B cell (primary cell): ENCODE measurements at regions of chr1 and their contacts with region 1.

Region 1: DNA sequence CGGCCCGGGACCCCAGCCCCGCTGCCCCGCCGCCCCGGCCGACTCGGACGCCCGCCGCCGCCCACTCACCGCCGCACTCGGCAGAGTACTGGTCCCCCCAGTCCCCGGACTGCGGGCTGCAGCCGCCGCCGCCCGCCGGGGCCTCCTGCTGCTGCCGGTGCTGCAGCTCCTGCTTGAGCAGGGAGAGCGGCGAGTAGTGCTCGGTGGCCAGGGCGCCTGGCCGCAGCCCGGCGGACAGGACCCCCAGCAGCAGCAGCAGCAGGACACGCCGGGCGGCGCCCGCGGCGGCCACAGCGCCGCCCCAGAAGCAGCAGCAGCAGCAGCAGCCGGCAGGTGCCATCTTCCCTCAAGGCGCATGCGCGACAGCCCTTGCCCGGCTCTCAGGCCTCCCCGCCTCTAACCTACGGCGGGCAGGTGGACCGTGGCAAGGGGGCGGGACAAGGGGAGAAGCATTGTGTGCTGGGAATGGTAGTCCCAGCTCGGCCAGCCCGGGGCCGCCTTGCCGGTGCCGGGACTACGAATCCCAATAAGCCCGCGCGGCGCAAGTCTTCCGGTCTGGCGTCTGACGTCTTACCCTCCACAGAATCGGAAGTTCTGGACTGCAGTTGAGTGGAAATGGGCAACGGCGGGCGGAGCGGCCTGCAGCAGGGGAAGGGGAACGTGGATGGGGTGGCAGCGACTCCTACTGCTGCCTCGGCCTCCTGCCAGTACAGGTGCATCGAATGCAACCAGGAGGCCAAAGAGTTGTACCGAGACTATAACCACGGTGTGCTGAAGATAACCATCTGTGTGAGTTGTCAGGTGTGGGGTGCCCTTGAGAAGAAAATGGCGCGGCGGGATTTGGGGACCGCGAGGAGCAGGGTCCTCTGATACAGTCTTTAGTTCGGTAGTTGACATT is at the starts of genes ARV1 and TTC13:
- DNase-seq: peak; percentile 99
- ATAC-seq: peak; percentile 95
- H3K4me3 ChIP-seq: peak within 1 kb of the TSS; percentile 67 to 91 (median 74)
- H3K4me3 Mint-ChIP-seq: peak within 1 kb of the TSS; percentile 99
- H3K27ac ChIP-seq: peak within 1 kb of the TSS; percentile 66 to 78
- H3K27ac Mint-ChIP-seq: peak within 1 kb of the TSS; percentile 99
- H3K4me1 ChIP-seq: peaks cover 29 to 40% of the 10 kb centered on the region in 2 donors
- H3K4me1 Mint-ChIP-seq: peaks cover 46% of the 10 kb centered on the region
- H3K27me3 ChIP-seq: no peaks in the 10 kb centered on the region
- H3K27me3 Mint-ChIP-seq: no peaks in the 10 kb centered on the region
- CTCF ChIP-seq: peak; percentile 76
- total RNA-seq, gene ARV1: 10.7 and 12.0 TPM in 2 replicates
- total RNA-seq, gene TTC13: 55.0 TPM in 2 replicates

Region 2: DNA sequence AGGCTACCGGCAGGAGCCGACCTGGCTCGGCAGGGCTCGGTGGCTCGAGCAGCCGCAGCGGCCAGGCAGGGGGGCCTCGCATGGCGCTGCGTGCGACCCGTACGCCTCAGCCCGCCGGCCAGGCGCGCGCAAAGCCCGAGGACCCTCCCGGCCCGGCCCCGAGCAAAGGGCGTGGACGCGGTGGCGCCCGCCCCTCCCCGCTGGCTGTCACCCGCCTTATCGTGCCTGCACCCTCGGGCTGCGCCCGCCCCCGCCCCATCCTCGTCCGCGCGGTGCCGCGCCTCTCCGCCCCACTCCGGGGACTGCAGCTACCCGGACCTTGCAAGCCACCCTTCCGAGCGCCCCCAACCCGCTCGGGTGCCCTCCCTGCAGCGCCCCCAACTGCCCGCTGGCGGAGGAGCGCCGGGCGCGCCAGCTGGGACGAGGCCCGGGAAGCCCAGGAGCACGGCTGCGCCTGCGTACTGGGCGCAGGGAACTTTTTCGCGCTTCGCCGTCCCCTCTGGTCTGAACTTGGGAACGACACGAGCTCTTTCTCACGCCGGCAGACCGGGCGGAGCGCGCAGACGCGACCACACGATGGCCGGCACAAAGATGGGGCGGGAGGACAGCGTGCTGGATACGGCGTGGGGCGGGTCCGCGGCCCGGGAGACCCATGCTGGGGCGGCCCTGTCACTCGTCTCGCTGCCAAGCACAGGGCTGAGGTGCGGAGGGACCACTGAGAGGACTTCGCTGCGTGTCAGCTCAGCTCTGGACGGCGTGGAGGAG is 1420.0 kb before region 1 on chr1 and contains the start of gene ABCB10:
- CTCF ChIA-PET with region 1: no interaction called
- POLR2A ChIA-PET with region 1: no interaction called
- intact Hi-C with region 1: loop called (anchors 2 kb)
- DNase-seq: peak; percentile 95
- ATAC-seq: peak; percentile 82
- H3K4me3 ChIP-seq: peak within 1 kb of the TSS; percentile 65 to 85 (median 69)
- H3K4me3 Mint-ChIP-seq: peak within 1 kb of the TSS; percentile 96
- H3K27ac ChIP-seq: peak within 1 kb of the TSS; percentile 43 to 68
- H3K27ac Mint-ChIP-seq: peak within 1 kb of the TSS; percentile 90
- H3K4me1 ChIP-seq: peaks cover 16 to 18% of the 10 kb centered on the region in 2 donors
- H3K4me1 Mint-ChIP-seq: peaks cover 32% of the 10 kb centered on the region
- H3K27me3 ChIP-seq: no peaks in the 10 kb centered on the region
- H3K27me3 Mint-ChIP-seq: no peaks in the 10 kb centered on the region
- CTCF ChIP-seq: peak; percentile 60
- total RNA-seq, gene ABCB10: 17.0 and 18.6 TPM in 2 replicates

Region 3: GRCh38 chr1:230867903-230868735 is 110.6 kb before region 1 on chr1 and contains the start of gene C1orf198:
- CTCF ChIA-PET with region 1: no interaction called
- POLR2A ChIA-PET with region 1: no interaction called
- intact Hi-C with region 1: loop called (anchors 1 kb)
- DNase-seq: peak; percentile 85
- ATAC-seq: peak; percentile 96
- H3K4me3 ChIP-seq: peak within 1 kb of the TSS; percentile 25 to 87 (median 76)
- H3K4me3 Mint-ChIP-seq: peak within 1 kb of the TSS; percentile 90
- H3K27ac ChIP-seq: peak within 1 kb of the TSS in 1 of 2 donors; percentile 50
- H3K27ac Mint-ChIP-seq: peak within 1 kb of the TSS; percentile 72
- H3K4me1 ChIP-seq: peaks cover 13 to 16% of the 10 kb centered on the region in 2 donors
- H3K4me1 Mint-ChIP-seq: peaks cover 17% of the 10 kb centered on the region
- H3K27me3 ChIP-seq: peaks cover 0 to 24% (median 17%) of the 10 kb centered on the region in 4 experiments
- H3K27me3 Mint-ChIP-seq: peaks cover 37% of the 10 kb centered on the region
- CTCF ChIP-seq: no peak
- total RNA-seq, gene C1orf198: 6.6 TPM in 2 replicates

Region 4: DNA sequence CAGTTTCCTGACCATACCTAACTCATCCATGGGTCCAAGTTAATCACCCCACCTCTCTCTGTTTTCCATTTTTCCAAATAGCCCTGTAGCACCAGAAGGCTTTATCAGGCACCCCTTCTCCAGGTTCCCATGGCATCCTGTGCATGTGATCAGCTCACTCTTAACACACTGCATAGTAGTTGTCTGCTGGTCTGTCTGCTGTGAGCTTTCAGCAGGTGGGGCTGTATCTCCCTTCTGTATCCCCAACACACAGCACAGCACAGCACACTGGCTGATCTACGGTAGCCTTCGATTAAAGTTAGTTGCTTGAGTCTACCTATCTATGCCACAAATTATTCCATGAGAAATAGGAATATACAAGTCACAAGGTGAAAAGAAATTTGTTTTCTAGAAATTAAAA is 56.1 kb before region 1 on chr1:
- CTCF ChIA-PET with region 1: interaction called, 14 read pairs
- POLR2A ChIA-PET with region 1: no interaction called
- intact Hi-C with region 1: loop called (anchors 1 kb)
- DNase-seq: no peak
- ATAC-seq: no peak
- H3K4me3 ChIP-seq: no peak overlapping the region
- H3K4me3 Mint-ChIP-seq: no peak overlapping the region
- H3K27ac ChIP-seq: no peak overlapping the region
- H3K27ac Mint-ChIP-seq: no peak overlapping the region
- H3K4me1 ChIP-seq: no peaks in the 10 kb centered on the region
- H3K4me1 Mint-ChIP-seq: no peaks in the 10 kb centered on the region
- H3K27me3 ChIP-seq: no peaks in the 10 kb centered on the region
- H3K27me3 Mint-ChIP-seq: no peaks in the 10 kb centered on the region
- CTCF ChIP-seq: no peak

Region 5: GRCh38 chr1:230957580-230957989 is 21.2 kb before region 1 on chr1:
- CTCF ChIA-PET with region 1: interaction called, 12 read pairs
- POLR2A ChIA-PET with region 1: interaction called, 3 read pairs
- intact Hi-C with region 1: loop called (anchors 2 kb)
- DNase-seq: peak; percentile 50
- ATAC-seq: peak; percentile 65
- H3K4me3 ChIP-seq: no peak overlapping the region
- H3K4me3 Mint-ChIP-seq: peak overlapping the region; percentile 88
- H3K27ac ChIP-seq: peak overlapping the region; percentile 56 to 67
- H3K27ac Mint-ChIP-seq: peak overlapping the region; percentile 92
- H3K4me1 ChIP-seq: peaks cover 24 to 27% of the 10 kb centered on the region in 2 donors
- H3K4me1 Mint-ChIP-seq: peaks cover 44% of the 10 kb centered on the region
- H3K27me3 ChIP-seq: no peaks in the 10 kb centered on the region
- H3K27me3 Mint-ChIP-seq: no peaks in the 10 kb centered on the region
- CTCF ChIP-seq: no peak

Region 6: DNA sequence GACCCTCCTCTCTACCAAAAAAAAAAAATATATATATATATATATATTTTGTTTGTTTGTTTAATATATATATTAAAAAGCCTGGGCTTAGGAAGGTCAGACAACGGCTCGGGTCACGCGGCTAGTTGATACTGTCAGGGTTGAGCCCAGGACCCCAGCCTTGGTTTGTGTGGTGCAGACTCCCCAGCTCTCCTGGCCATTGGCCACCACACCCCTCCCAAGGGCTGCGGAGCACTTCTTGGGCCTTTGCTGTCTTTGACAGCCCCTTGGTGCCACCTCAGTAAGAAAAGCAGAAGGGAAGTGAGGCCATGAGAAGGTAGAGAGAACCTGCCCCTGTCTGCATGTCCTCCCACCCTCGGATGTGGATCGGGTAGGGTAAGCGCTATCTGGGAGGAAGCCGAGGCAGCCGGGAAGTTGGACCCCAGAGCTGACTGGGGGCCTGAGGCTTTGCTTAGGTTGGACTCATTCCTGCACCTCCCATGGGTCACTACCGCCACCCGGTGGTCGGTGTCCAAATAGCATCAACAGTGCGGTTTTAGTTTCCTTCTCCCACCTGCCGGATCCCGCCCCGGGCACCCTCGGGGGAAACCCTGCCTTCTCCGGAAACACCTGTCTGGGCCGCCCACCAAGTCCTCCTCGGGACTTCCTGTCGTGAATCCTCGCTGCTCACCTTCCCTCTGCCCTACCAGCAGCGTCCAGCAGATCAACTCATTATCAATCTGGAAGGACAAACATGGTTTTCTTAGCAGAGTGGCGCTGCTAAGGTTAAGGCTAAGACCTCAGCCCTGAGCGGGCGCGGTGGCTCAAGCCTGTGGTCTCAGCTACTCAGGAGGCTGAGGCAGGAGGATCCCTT is 232.5 kb after region 1 on chr1:
- CTCF ChIA-PET with region 1: interaction called, 5 read pairs
- POLR2A ChIA-PET with region 1: interaction called, 5 read pairs
- intact Hi-C with region 1: loop called (anchors 1 kb)
- DNase-seq: peak; percentile 94
- ATAC-seq: peak; percentile 93
- H3K4me3 ChIP-seq: peak overlapping the region; percentile 21 to 67 (median 37)
- H3K4me3 Mint-ChIP-seq: peak overlapping the region; percentile 88
- H3K27ac ChIP-seq: peak overlapping the region; percentile 59 to 65
- H3K27ac Mint-ChIP-seq: peak overlapping the region; percentile 88
- H3K4me1 ChIP-seq: peaks cover 22 to 29% of the 10 kb centered on the region in 2 donors
- H3K4me1 Mint-ChIP-seq: peaks cover 31% of the 10 kb centered on the region
- H3K27me3 ChIP-seq: no peaks in the 10 kb centered on the region
- H3K27me3 Mint-ChIP-seq: no peaks in the 10 kb centered on the region
- CTCF ChIP-seq: peak; percentile 93

Region 7: GRCh38 chr1:231528172-231529029 is 549.7 kb after region 1 on chr1 and contains the start of gene TSNAX:
- CTCF ChIA-PET with region 1: interaction called, 3 read pairs
- POLR2A ChIA-PET with region 1: no interaction called
- intact Hi-C with region 1: loop called (anchors 2 kb)
- DNase-seq: peak; percentile 98
- ATAC-seq: peak; percentile 94
- H3K4me3 ChIP-seq: peak within 1 kb of the TSS; percentile 71 to 94 (median 91)
- H3K4me3 Mint-ChIP-seq: peak within 1 kb of the TSS; percentile 99
- H3K27ac ChIP-seq: peak within 1 kb of the TSS; percentile 90 to 99
- H3K27ac Mint-ChIP-seq: peak within 1 kb of the TSS; percentile 100
- H3K4me1 ChIP-seq: peaks cover 21 to 24% of the 10 kb centered on the region in 2 donors
- H3K4me1 Mint-ChIP-seq: peaks cover 32% of the 10 kb centered on the region
- H3K27me3 ChIP-seq: no peaks in the 10 kb centered on the region
- H3K27me3 Mint-ChIP-seq: no peaks in the 10 kb centered on the region
- CTCF ChIP-seq: no peak
- total RNA-seq, gene TSNAX: 34.8 and 41.4 TPM in 2 replicates